Endothelial cell of umbilical vein (primary cell): ENCODE measurements at regions of chr15 and their contacts with region 1.

Region 1: DNA sequence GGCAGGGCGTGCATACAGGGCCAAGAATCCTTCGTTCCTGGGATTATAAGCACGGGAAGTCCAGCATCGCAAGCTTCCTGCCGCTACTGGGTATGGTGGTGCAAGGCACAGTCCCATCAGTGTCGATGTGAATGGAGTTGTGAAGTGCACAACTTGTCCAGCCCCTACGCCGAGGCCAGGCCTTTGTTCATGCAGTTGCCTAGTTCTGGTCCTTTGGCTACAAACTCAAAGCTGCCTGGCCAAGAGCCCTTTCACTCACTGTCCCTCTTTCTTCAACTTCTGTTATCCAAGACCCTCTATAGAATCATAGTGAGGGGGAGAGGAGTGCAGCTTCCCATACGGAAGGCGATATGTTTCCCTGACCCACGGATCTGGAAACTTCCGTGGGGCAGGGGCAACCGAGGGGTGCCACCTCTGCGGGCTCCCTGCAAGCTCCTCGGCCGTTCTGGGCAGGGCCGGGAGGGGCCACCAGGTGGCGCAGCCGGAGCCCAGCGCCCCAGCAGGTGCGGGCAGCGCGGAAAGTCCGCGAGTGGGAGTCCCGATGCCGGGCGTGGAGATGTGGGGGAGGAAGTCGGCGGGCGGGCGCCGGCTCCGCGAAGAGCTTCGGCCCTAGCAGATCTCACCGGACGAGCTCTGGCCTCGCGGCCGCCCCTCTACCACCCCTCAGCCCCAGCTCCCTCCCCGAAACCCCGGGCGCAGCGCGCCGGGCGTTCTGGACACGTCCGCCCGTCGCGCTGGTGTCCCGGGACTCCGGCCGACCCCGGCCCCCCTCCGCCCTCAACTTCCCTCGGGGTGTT is 693 bp downstream of the RASGRP1 start:
- DNase-seq: peak; percentile 48
- H3K4me3 ChIP-seq: peak overlapping the region; percentile 15 to 61 (median 44)
- H3K27ac ChIP-seq: no peak overlapping the region
- H3K4me1 ChIP-seq: no peaks in the 10 kb centered on the region
- H3K27me3 ChIP-seq: peaks cover 34 to 54% of the 10 kb centered on the region in 2 experiments
- CTCF ChIP-seq: peak; percentile 83 to 95
- POLR2A ChIP-seq: no peak

Region 2: DNA sequence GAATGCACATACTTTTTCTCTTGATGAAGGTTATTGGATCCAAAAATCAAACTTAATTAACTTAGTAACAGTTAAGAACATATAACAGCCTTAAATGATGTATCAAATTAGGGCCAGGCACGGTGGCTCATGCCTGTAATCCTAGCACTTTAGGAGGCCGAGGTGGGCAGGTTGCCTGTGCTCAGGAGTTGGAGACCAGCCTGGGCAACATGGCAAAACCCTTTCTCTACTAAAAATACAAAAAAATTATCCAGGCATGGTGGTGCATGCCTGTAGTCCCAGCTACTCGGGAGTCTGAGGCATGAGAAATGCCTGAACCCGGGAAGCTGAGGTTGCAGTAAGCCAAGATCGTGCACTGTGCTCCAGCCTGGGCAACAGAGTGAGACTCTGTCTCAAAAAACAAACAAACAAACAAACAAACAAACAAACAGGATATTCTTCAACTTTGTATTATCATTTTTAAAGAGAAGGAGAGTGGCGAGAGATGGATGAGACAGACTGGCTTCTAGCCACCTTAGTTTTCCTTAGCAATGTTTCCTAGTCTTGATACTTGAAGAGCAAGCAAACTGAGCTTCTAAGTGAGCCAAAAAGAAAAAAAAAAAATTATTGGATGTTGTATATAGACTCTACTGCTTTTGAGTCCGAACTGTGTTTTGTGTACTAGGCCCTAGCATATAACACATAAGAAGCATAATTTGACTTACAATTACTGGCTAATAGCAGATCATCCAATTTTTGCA is 297.5 kb before region 1 on chr15:
- CTCF ChIA-PET with region 1: no interaction called
- POLR2A ChIA-PET with region 1: no interaction called
- dilution Hi-C with region 1: no loop called
- intact Hi-C with region 1: no loop called
- DNase-seq: no peak
- H3K4me3 ChIP-seq: no peak overlapping the region
- H3K27ac ChIP-seq: no peak overlapping the region
- H3K4me1 ChIP-seq: no peaks in the 10 kb centered on the region
- H3K27me3 ChIP-seq: no peaks in the 10 kb centered on the region
- CTCF ChIP-seq: no peak
- POLR2A ChIP-seq: no peak

Region 3: DNA sequence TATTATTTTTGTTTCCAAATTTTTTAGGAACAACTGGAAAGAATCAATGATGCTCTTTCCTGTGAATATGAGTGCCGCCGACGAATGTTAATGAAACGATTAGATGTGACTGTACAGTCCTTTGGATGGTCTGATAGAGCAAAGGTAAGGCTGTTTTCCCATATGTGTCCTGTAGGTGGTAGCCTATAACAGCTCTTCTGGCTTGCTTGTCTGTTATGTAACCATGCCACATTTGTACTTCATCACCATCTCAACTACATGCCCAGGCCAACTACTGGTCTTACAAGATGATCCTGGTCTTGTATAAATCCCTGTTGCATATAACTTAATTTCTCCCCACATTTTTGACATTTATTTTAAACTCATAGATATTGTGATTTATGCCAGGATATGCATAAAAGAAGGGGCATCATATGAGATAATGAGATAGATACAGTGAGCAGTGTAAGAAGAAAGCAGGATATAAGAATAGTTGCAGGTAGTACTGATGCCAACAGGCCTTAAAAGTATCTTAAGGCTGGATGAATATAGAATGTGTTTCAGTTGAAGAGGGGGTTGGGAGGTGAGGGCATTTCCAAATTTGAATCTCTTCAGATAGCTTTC is 89.7 kb before region 1 on chr15:
- CTCF ChIA-PET with region 1: interaction called, 22 read pairs
- POLR2A ChIA-PET with region 1: no interaction called
- dilution Hi-C with region 1: no loop called
- intact Hi-C with region 1: no loop called
- DNase-seq: peak; percentile 72
- H3K4me3 ChIP-seq: no peak overlapping the region
- H3K27ac ChIP-seq: no peak overlapping the region
- H3K4me1 ChIP-seq: peaks cover 4% of the 10 kb centered on the region
- H3K27me3 ChIP-seq: no peaks in the 10 kb centered on the region
- CTCF ChIP-seq: peak; percentile 44 to 65
- POLR2A ChIP-seq: no peak

Region 4: DNA sequence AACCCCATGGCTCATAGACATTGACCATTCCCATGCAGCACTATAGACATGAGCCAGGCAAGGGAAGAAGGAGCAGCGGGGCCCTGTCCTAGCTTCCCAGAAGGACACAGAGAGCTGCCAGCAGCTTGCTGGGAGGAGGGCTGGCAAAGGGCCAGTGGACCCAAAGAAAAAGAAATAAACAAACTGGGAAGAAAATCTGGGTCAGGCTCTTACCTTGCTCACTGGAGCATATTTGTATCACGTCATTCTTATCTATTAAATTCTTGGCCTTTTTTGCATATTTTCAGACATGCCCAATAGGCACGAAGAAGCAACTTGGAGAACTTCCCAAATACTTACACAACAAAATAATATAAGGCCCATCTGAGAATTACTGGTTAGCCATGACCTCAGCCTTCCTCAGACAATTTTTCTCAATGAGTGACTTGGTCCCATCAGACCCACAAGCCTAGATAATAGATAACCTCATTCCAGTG is 27.7 kb before region 1 on chr15:
- CTCF ChIA-PET with region 1: interaction called, 14 read pairs
- POLR2A ChIA-PET with region 1: no interaction called
- dilution Hi-C with region 1: no loop called
- intact Hi-C with region 1: no loop called
- DNase-seq: no peak
- H3K4me3 ChIP-seq: no peak overlapping the region
- H3K27ac ChIP-seq: no peak overlapping the region
- H3K4me1 ChIP-seq: no peaks in the 10 kb centered on the region
- H3K27me3 ChIP-seq: peaks cover 12 to 20% of the 10 kb centered on the region in 2 experiments
- CTCF ChIP-seq: no peak
- POLR2A ChIP-seq: no peak

Region 5: GRCh38 chr15:38588672-38589071 is 24.8 kb after region 1 on chr15:
- CTCF ChIA-PET with region 1: interaction called, 14 read pairs
- POLR2A ChIA-PET with region 1: no interaction called
- dilution Hi-C with region 1: no loop called
- intact Hi-C with region 1: no loop called
- DNase-seq: no peak
- H3K4me3 ChIP-seq: no peak overlapping the region
- H3K27ac ChIP-seq: no peak overlapping the region
- H3K4me1 ChIP-seq: no peaks in the 10 kb centered on the region
- H3K27me3 ChIP-seq: peaks cover 13 to 25% of the 10 kb centered on the region in 2 experiments
- CTCF ChIP-seq: no peak
- POLR2A ChIP-seq: no peak

Region 6: GRCh38 chr15:38626443-38627050 is 62.6 kb after region 1 on chr15:
- CTCF ChIA-PET with region 1: interaction called, 17 read pairs
- POLR2A ChIA-PET with region 1: no interaction called
- dilution Hi-C with region 1: no loop called
- intact Hi-C with region 1: no loop called
- DNase-seq: no peak
- H3K4me3 ChIP-seq: no peak overlapping the region
- H3K27ac ChIP-seq: no peak overlapping the region
- H3K4me1 ChIP-seq: no peaks in the 10 kb centered on the region
- H3K27me3 ChIP-seq: peaks cover 12 to 18% of the 10 kb centered on the region in 2 experiments
- CTCF ChIP-seq: no peak
- POLR2A ChIP-seq: no peak

Region 7: DNA sequence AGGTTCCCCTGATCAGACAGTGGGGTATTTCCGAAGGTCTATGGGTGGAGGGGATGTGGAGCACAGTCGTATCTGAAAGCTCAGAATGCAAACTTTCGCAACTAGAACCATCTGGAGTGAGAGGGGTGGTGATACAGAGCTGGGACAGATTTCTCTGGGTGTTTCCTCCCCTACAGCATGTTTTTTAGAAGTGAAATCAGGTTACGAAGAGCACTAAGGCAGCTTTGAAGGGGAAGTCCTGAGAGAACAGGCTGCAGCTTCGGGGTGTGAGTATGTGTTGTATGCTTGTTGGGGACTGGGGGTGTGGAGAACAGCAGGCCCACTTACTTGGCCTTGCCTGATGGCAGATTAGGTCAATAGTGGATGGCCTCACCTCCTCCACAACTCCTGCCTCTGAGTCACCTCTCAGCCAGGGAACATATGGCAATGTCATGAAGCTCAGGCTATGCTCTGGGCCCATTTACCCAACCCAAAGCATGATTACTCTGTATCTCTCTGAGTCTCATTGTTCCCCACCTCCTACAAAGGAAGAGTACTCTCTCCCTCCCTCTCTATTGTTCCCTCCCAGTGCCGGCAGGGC is 107.8 kb after region 1 on chr15:
- CTCF ChIA-PET with region 1: interaction called, 10 read pairs
- POLR2A ChIA-PET with region 1: no interaction called
- dilution Hi-C with region 1: no loop called
- intact Hi-C with region 1: no loop called
- DNase-seq: no peak
- H3K4me3 ChIP-seq: no peak overlapping the region
- H3K27ac ChIP-seq: no peak overlapping the region
- H3K4me1 ChIP-seq: no peaks in the 10 kb centered on the region
- H3K27me3 ChIP-seq: peaks cover 22 to 33% of the 10 kb centered on the region in 2 experiments
- CTCF ChIP-seq: no peak
- POLR2A ChIP-seq: no peak

Region 8: GRCh38 chr15:38745126-38745525 is 181.2 kb after region 1 on chr15:
- CTCF ChIA-PET with region 1: no interaction called
- POLR2A ChIA-PET with region 1: no interaction called
- dilution Hi-C with region 1: no loop called
- intact Hi-C with region 1: no loop called
- DNase-seq: no peak
- H3K4me3 ChIP-seq: no peak overlapping the region
- H3K27ac ChIP-seq: no peak overlapping the region
- H3K4me1 ChIP-seq: no peaks in the 10 kb centered on the region
- H3K27me3 ChIP-seq: peaks cover 3% of the 10 kb centered on the region in 2 experiments
- CTCF ChIP-seq: no peak
- POLR2A ChIP-seq: no peak

Region 9: GRCh38 chr15:38795471-38796245 is 231.7 kb after region 1 on chr15:
- CTCF ChIA-PET with region 1: no interaction called
- POLR2A ChIA-PET with region 1: no interaction called
- dilution Hi-C with region 1: no loop called
- intact Hi-C with region 1: no loop called
- DNase-seq: peak; percentile 14
- H3K4me3 ChIP-seq: no peak overlapping the region
- H3K27ac ChIP-seq: no peak overlapping the region
- H3K4me1 ChIP-seq: no peaks in the 10 kb centered on the region
- H3K27me3 ChIP-seq: peaks cover 0 to 4% of the 10 kb centered on the region in 2 experiments
- CTCF ChIP-seq: no peak
- POLR2A ChIP-seq: no peak

Region 10: GRCh38 chr15:39782441-39783138 is 1218.7 kb after region 1 on chr15 and contains the start of gene FSIP1:
- CTCF ChIA-PET with region 1: no interaction called
- POLR2A ChIA-PET with region 1: no interaction called
- dilution Hi-C with region 1: no loop called
- intact Hi-C with region 1: no loop called
- DNase-seq: peak; percentile 97
- H3K4me3 ChIP-seq: peak within 1 kb of the TSS; percentile 87 to 98 (median 93)
- H3K27ac ChIP-seq: peak within 1 kb of the TSS; percentile 67
- H3K4me1 ChIP-seq: peaks cover 26% of the 10 kb centered on the region
- H3K27me3 ChIP-seq: no peaks in the 10 kb centered on the region
- CTCF ChIP-seq: no peak
- POLR2A ChIP-seq: peak; percentile 90
- total RNA-seq, gene FSIP1: 1.1 and 1.2 TPM in 2 replicates